ENCODE measurements at regions of chr9 and their contacts with region 1.

Region 1: GRCh38 chr9:137049544-137050449 is 3.8 kb upstream of the NPDC1 start:
- DNase-seq: peak; percentile 77 to 88 (median 81)
- ATAC-seq: peak; percentile 31
- H3K4me3 ChIP-seq: no peak overlapping the region
- H3K27ac ChIP-seq: no peak overlapping the region
- H3K4me1 ChIP-seq: peaks cover 45% of the 10 kb centered on the region
- H3K27me3 ChIP-seq: no peaks in the 10 kb centered on the region
- CTCF ChIP-seq: peak; percentile 21 to 83 (median 67)
- POLR2A ChIP-seq: no peak

Region 2: GRCh38 chr9:137064027-137064879 is 14.5 kb after region 1 on chr9:
- intact Hi-C with region 1: loop called (anchors 2 kb)
- DNase-seq: peak; percentile 64 to 76 (median 74)
- ATAC-seq: peak; percentile 76
- H3K4me3 ChIP-seq: no peak overlapping the region
- H3K27ac ChIP-seq: no peak overlapping the region
- H3K4me1 ChIP-seq: peaks cover 6% of the 10 kb centered on the region
- H3K27me3 ChIP-seq: no peaks in the 10 kb centered on the region
- CTCF ChIP-seq: peak; percentile 91 to 97 (median 94)
- POLR2A ChIP-seq: no peak